HEK293 (cell line): ENCODE measurements at regions of chr12 and their contacts with region 1.

Region 1: DNA sequence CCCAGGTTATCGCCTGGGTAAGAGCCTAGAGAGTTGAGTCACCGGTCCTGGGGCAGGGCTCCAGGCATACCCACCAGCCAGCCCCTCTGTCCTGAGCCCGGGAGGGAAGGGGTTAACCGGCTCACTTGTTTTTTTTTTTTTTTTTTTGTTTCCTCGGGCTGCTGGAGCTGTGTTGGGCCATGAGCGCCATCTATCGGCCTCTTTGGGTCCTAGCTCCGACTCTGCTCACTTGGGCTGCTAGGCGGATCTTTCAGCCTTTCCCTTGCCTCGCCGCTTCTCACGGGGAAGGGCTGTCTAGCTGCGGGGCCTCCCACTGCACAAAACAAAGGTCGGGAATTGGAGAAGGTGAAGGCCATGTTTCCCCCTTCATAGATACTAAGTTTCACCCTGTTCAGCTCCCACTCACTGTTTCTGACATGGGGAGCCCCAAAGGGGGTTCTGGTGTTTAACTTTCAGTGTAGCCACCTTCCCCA is 2.8 kb upstream of the SMUG1 start:
- H3K4me3 ChIP-seq: no peak overlapping the region
- H3K27ac ChIP-seq: peak overlapping the region; percentile 43; the same call in 1 of the 2 replicates
- H3K4me1 ChIP-seq: peaks cover 14% of the 10 kb centered on the region
- CTCF ChIP-seq: peak; percentile 97

Region 2: GRCh38 chr12:53984901-53985709 is 206.5 kb before region 1 on chr12 and contains the start of gene HOXC10:
- CTCF ChIA-PET with region 1: interaction called, 21 read pairs
- POLR2A ChIA-PET with region 1: no interaction called
- H3K4me3 ChIP-seq: peak within 1 kb of the TSS; percentile 32
- H3K27ac ChIP-seq: peak within 1 kb of the TSS; percentile 90
- H3K4me1 ChIP-seq: peaks cover 25% of the 10 kb centered on the region
- CTCF ChIP-seq: peak; percentile 81

Region 3: GRCh38 chr12:54017878-54018467 is 173.6 kb before region 1 on chr12:
- CTCF ChIA-PET with region 1: interaction called, 14 read pairs
- POLR2A ChIA-PET with region 1: interaction called, 7 read pairs
- H3K4me3 ChIP-seq: peak overlapping the region; percentile 81
- H3K27ac ChIP-seq: peak overlapping the region; percentile 100
- H3K4me1 ChIP-seq: peaks cover 49% of the 10 kb centered on the region
- CTCF ChIP-seq: no peak

Region 4: DNA sequence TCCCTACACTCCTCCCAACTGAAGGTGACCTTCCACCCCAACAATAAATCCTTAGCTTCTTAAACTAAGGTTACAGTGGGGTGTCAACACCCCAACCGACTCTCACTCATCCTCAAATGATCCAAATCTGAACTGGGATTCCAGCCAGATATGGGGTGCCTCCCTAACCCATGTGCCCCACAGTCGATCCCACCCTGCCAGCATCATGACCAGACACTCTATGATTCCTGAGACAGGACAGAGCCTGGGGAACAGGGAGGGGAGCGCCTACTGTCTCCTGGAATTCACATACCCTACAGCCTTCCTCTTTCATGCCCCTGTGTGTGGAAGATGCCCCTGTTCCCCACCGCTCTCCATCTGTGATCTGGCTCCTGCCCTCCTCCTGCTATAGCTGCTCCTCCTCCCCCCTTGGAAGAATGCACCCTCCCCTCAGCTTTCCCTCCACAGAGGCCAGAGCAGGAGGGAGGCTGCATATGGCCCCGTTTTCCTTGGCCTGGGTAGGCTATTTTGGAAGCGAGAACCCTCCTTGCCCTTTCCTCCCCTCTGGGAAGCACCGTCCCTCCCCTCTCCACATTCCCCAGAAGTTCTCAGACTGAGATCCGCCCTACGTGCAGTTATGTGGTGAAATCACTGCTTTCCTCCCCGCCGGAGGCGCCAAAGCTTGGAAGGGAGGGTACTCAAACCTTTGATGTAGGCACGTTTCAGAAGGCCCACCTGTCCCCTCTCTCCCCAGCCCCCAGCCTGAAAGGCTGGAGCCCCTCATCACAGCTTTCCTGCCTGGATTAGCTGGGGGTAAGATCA is 50.8 kb before region 1 on chr12:
- CTCF ChIA-PET with region 1: interaction called, 81 read pairs
- POLR2A ChIA-PET with region 1: no interaction called
- H3K4me3 ChIP-seq: no peak overlapping the region
- H3K27ac ChIP-seq: no peak overlapping the region
- H3K4me1 ChIP-seq: peaks cover 2% of the 10 kb centered on the region
- CTCF ChIP-seq: no peak

Region 5: DNA sequence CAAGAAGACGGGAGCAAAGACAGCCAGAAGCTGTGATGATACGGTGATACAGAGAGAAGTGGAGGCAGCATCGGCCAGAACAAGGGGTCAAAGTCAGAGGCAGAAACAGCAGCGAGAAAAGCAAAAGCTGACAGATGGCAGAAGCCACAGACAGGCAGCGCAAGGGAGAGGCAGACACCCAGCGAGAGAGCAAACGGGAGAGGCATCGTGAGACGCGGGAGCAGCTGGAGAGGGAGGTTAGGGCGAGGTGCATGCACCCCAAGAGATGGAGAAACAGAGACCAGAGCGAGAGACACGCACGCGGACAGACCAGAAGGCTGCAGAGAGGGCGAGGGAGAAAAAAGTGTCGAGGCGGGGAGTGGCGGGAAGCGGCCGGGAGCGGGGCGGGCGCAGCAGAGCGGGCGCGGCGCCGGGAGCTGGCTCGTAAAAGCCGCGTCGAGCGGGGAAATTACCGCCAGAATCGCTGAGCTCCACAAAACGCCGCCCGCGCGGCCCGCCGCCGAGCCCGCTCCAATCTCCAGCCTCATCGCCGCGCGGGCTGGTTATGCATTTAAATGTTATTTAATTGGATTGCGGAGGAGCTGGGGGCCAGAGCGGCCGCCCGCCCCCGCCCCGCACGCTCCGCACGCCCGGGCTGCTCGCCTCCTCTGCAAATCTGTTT is 18.4 kb before region 1 on chr12:
- CTCF ChIA-PET with region 1: interaction called, 13 read pairs
- POLR2A ChIA-PET with region 1: interaction called, 5 read pairs
- H3K4me3 ChIP-seq: peak overlapping the region; percentile 23
- H3K27ac ChIP-seq: peak overlapping the region; percentile 40; the same call in 1 of the 2 replicates
- H3K4me1 ChIP-seq: peaks cover 12% of the 10 kb centered on the region; the same call in 1 of the 2 replicates
- CTCF ChIP-seq: no peak

Region 6: GRCh38 chr12:54207484-54208294 is 16.1 kb after region 1 on chr12:
- CTCF ChIA-PET with region 1: interaction called, 86 read pairs
- POLR2A ChIA-PET with region 1: interaction called, 3 read pairs
- H3K4me3 ChIP-seq: no peak overlapping the region
- H3K27ac ChIP-seq: 0 out of 2 replicates have a peak overlapping the region, but pooled peaks have one; percentile 13
- H3K4me1 ChIP-seq: no peaks in the 10 kb centered on the region
- CTCF ChIP-seq: peak; percentile 89

Region 7: DNA sequence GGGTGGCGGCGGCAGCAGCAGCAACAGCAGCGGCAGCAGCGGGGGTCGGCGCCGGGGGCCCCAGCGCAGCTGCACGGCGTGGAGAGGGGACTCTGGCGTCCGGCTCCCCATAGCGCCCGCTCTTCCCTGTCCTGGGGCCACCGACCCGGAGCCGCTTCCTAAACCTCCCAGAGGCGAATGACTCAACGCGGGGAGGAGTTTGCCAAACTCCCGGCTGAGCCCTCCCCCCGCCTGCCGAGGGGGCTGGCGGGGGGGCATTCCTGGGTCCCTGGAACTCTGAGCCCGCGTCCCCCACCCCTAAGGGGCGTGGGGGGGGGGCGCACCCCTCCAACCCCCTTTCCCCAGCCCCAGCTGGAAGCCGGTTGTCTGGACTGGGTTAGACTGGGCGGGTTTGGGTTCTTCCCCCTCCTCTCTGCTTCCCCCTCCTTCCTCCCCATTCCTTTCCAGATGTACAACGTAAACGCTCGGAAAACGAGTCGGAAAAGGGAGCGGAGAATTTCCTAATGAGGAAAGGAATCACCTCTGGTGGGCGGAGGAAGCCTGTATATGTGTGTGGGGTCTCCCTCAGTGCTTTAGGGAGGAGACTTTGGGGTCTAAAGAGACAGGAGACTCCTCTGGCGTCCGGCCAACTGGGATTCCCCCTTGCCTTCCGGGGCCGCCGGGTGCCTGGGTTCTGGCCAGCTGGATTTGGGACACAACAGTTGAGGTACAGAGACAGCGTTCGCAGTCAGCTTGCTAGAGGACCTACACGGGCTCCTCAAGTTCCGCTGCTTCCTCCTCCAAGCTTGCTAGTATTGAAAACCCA is 227.7 kb after region 1 on chr12 and contains the start of gene ITGA5:
- CTCF ChIA-PET with region 1: no interaction called
- POLR2A ChIA-PET with region 1: no interaction called
- H3K4me3 ChIP-seq: peak within 1 kb of the TSS; percentile 74
- H3K27ac ChIP-seq: peak within 1 kb of the TSS; percentile 78; the same call in 1 of the 2 replicates
- H3K4me1 ChIP-seq: peaks cover 11% of the 10 kb centered on the region
- CTCF ChIP-seq: no peak